ENCODE measurements at regions of chr9 and their contacts with region 1.

Region 1: GRCh38 chr9:130172161-130172857 is at the start of gene NCS1:
- DNase-seq: peak; percentile 93
- H3K4me3 ChIP-seq: peak within 1 kb of the TSS; percentile 69 to 95 (median 82)
- H3K27ac ChIP-seq: peak within 1 kb of the TSS; percentile 94 to 99 (median 97)
- H3K4me1 ChIP-seq: peaks cover 0 to 48% (median 45%) of the 10 kb centered on the region in 4 donors
- H3K27me3 ChIP-seq: no peaks in the 10 kb centered on the region
- CTCF ChIP-seq: no peak
- EP300 ChIP-seq: no peak
- POLR2A ChIP-seq: no peak
- total RNA-seq, gene NCS1: 78.5 to 133 (median 96.9) TPM

Region 2: DNA sequence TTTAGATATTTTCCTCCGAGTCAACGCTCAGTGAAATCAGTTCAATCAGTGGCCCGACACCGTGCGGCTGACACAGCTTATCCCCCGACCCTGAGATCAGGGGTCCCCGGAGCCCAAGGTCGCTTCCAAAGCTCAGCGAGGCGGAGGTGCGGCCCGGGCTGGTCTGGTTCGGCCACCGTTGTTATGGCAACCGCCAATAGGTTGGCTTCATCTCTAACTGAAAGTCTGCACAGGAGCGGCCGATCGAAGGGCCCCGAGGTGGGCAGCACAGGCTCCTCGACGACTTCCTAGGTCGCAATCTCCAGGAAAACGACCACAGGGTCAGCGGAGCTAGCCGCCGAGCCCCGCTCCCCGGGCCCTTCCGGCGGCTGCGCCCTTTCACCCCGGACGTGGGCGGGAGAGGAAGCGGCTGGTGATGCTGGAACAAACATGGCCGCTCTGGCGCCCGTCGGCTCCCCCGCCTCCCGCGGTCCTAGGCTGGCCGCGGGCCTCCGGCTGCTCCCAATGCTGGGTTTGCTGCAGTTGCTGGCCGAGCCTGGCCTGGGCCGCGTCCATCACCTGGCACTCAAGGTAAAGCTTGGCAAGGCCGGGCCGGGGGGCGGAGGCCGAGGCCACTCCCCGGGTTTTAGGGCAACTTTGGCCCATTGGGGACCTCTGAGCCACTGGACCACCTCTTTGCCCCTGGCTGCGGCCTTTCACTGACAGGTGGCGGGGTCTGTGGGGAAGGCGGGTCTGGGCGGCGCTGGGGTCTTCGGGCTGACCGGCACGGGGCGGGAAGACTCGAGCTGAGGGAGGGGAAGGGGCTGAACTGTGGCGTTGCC is 118.6 kb before region 1 on chr9 and contains the start of gene GPR107:
- intact Hi-C with region 1: loop called (anchors 5 kb)
- DNase-seq: peak; percentile 88
- H3K4me3 ChIP-seq: peak within 1 kb of the TSS; percentile 90 to 97 (median 92)
- H3K27ac ChIP-seq: peak within 1 kb of the TSS; percentile 86 to 92 (median 88)
- H3K4me1 ChIP-seq: peaks cover 0 to 40% (median 35%) of the 10 kb centered on the region in 4 donors
- H3K27me3 ChIP-seq: no peaks in the 10 kb centered on the region
- CTCF ChIP-seq: no peak
- EP300 ChIP-seq: peak in 1 of 4 donors; percentile 7
- POLR2A ChIP-seq: peak; percentile 74 to 83
- total RNA-seq, gene GPR107: 18.9 to 27.7 (median 21.6) TPM

Region 3: DNA sequence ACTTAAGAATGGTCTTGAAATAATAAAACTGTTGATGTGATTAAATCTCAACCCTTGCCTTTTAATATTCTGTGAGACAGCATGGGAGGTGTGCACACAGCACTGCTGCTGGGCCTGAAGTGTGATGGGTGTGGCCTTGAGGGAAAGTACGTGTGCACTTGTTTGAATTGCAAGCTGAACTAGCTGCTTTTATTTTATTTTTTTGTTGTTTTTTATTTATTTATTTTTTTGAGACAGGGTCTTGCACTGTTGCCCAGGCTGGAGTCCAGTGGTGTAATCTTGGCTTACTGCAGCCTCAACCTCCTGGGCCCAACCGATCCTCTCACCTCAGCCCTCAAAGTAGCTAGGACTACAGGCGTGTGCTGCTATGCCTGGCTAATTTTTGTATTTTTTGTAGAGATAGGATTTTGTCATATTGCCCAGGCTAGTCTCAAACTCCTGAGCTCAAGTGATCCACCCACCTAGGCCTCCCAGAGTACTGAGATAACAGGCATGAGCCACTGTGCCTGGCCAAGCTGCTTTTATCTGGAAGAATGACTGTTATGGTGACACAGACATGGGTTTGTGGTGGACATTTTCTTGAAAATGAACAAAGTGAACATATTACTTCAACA is 59.7 kb before region 1 on chr9:
- intact Hi-C with region 1: loop called (anchors 2 kb)
- DNase-seq: no peak
- H3K4me3 ChIP-seq: no peak overlapping the region
- H3K27ac ChIP-seq: peak overlapping the region in 3 of 4 donors; percentile 88 to 90 (median 90)
- H3K4me1 ChIP-seq: peaks cover 0 to 85% (median 63%) of the 10 kb centered on the region in 4 donors
- H3K27me3 ChIP-seq: no peaks in the 10 kb centered on the region
- CTCF ChIP-seq: no peak
- EP300 ChIP-seq: no peak
- POLR2A ChIP-seq: no peak

Region 4: GRCh38 chr9:130138171-130138653 is 34.1 kb before region 1 on chr9:
- intact Hi-C with region 1: loop called (anchors 2 kb)
- DNase-seq: peak; percentile 87
- H3K4me3 ChIP-seq: no peak overlapping the region
- H3K27ac ChIP-seq: peak overlapping the region; percentile 74 to 93 (median 89)
- H3K4me1 ChIP-seq: peaks cover 0 to 61% (median 45%) of the 10 kb centered on the region in 4 donors
- H3K27me3 ChIP-seq: no peaks in the 10 kb centered on the region
- CTCF ChIP-seq: no peak
- EP300 ChIP-seq: peak in 1 of 4 donors; percentile 50
- POLR2A ChIP-seq: no peak

Region 5: DNA sequence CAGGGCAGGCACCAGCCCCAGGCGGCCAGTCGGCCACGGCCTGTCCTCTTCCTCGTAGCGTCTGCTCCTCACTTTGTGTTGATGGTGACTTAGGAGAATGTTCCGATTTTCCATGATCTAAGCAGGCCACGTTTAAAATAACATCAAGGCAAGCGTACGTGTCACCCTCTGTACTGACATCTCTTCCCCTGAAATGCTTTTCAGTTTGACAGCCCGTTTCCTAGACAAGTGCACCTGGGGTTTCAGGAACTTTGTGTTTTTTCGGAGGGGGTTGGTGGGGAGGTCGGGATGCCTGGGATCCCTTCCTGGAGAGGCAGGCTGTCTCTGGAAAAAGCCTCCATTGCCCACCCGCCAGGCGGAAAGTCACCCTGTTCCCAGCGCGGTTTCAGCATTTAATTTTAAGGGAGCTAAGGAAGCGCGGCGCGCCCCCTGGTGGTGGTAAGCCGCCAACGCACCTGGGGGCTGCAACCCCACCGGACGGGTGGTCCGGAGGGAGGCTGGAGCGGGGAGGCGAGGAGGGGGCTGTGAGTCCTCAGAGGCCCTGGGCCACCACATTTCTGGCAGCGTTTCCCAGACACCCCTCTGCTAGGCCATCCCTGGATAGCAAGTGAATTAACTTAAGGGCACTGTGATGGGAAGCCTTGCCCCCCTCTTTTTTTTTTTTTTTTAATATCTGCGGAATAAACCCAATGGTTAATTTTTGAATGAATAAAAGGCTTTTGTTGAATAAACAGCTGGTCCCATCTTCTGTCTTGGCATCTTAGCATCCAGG is 63.8 kb after region 1 on chr9:
- intact Hi-C with region 1: loop called (anchors 1 kb)
- DNase-seq: peak; percentile 86
- H3K4me3 ChIP-seq: no peak overlapping the region
- H3K27ac ChIP-seq: peak overlapping the region; percentile 75 to 92 (median 82)
- H3K4me1 ChIP-seq: peaks cover 0 to 54% (median 45%) of the 10 kb centered on the region in 4 donors
- H3K27me3 ChIP-seq: no peaks in the 10 kb centered on the region
- CTCF ChIP-seq: peak; percentile 97 to 100 (median 100)
- EP300 ChIP-seq: peak in 2 of 4 donors; percentile 47
- POLR2A ChIP-seq: no peak

Measured in sigmoid colon (tissue), 7 donors.